Natural killer cell (primary cell): ENCODE measurements at regions of chr3 and their contacts with region 1.

Region 1: GRCh38 chr3:9396700-9397521 is 504 bp upstream of the SETD5 start:
- DNase-seq: peak; percentile 99 to 100
- ATAC-seq: peak; percentile 66 to 86 (median 72)
- H3K4me3 ChIP-seq: peak overlapping the region; percentile 74
- H3K4me3 Mint-ChIP-seq: peak overlapping the region; percentile 97
- H3K27ac ChIP-seq: peak overlapping the region; percentile 96
- H3K27ac Mint-ChIP-seq: peak overlapping the region; percentile 99
- H3K4me1 ChIP-seq: peaks cover 25% of the 10 kb centered on the region
- H3K4me1 Mint-ChIP-seq: peaks cover 64 to 73% of the 10 kb centered on the region in 2 donors
- H3K27me3 ChIP-seq: no peaks in the 10 kb centered on the region
- H3K27me3 Mint-ChIP-seq: no peaks in the 10 kb centered on the region
- CTCF ChIP-seq: no peak

Region 2: DNA sequence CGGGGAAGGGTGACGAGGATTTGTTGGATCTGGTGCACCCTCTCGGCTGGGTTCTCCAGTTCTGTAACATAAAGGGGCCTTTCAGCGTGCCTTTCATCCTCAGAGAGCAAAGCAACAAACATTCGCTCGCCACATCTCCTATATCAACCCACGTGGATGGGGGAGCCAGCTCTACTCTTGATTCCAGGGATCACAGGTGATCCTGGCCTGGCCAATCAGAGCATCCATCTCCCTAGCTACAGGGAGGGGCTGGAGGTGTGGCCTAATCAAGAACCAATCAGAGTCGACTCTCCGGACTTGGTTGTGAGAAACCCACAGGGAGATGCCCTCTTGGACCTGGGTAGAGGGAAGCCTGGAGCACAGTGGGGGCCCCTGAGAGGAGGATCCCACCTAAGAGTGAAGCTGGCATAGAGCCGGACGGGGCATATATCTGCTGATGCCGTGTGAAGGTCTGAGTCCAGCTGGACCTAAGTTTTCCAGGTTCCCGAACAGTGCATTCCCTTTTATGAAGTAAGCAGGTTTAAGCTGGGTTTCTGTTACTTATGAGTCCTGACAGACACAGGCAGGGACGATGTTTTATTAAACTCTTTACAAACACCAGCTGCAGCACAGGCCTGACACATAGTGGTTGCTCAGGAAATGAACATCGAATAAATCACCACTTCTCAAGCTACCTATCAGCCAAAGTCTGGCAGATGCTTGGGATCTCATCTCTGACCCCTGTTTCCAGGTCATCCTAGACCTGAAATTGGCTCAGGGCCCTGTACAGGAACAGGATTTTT is 382.9 kb before region 1 on chr3:
- intact Hi-C with region 1: no loop called
- DNase-seq: no peak
- ATAC-seq: no peak
- H3K4me3 ChIP-seq: no peak overlapping the region
- H3K4me3 Mint-ChIP-seq: no peak overlapping the region
- H3K27ac ChIP-seq: no peak overlapping the region
- H3K27ac Mint-ChIP-seq: no peak overlapping the region
- H3K4me1 ChIP-seq: no peaks in the 10 kb centered on the region
- H3K4me1 Mint-ChIP-seq: no peaks in the 10 kb centered on the region
- H3K27me3 ChIP-seq: no peaks in the 10 kb centered on the region
- H3K27me3 Mint-ChIP-seq: peaks cover 3 to 6% of the 10 kb centered on the region in 2 donors
- CTCF ChIP-seq: no peak

Region 3: DNA sequence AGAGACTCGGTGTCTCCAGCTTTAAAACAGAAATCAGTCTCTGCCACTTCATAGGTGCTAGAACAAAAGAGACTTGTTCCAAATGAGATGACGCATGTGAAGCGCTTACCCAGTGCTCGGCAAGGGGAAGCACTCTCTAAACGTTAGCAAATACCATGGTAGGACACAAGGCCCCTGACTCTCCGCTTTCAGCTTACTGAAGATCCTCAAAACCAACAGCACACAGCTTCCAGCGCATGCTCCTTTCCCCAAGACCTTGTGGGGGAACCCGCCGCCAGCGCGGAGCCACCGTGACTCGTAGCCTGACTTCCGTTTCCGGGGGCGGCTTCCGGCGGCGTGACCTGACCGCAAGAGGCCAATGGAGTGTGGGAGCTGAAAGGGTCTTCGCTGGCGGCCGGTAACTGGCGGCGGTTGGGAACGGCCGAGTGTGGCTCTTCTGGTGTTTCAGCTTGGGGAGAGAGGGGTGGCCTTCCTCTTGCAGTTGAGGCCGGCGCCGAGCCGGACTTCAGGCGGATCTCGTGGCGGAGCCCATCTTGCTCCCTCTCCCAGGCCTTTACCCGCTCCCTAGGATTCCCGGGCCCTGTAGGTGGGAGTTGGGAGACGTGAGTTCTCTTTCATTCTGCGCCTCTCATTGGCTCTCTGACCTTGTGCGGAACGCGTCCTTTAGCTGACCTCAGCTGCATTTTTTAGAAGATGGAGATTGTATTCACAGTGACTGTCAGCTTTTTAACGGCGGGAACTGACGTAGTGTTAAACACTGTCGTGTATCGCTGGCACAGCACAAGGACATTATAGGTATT is 34.0 kb before region 1 on chr3 and contains the start of gene THUMPD3:
- intact Hi-C with region 1: loop called (anchors 1 kb)
- DNase-seq: peak; percentile 89 to 94
- ATAC-seq: peak; percentile 92 to 96 (median 96)
- H3K4me3 ChIP-seq: peak within 1 kb of the TSS; percentile 77
- H3K4me3 Mint-ChIP-seq: peak within 1 kb of the TSS; percentile 97
- H3K27ac ChIP-seq: peak within 1 kb of the TSS; percentile 92
- H3K27ac Mint-ChIP-seq: peak within 1 kb of the TSS; percentile 98 to 99
- H3K4me1 ChIP-seq: peaks cover 11% of the 10 kb centered on the region
- H3K4me1 Mint-ChIP-seq: peaks cover 9 to 10% of the 10 kb centered on the region in 2 donors
- H3K27me3 ChIP-seq: no peaks in the 10 kb centered on the region
- H3K27me3 Mint-ChIP-seq: peaks cover 0 to 8% of the 10 kb centered on the region in 2 donors
- CTCF ChIP-seq: no peak
- total RNA-seq, gene THUMPD3: 44.0 to 48.8 (median 46.3) TPM

Region 4: GRCh38 chr3:9452417-9452816 is 55.5 kb after region 1 on chr3:
- intact Hi-C with region 1: loop called (anchors 2 kb)
- DNase-seq: peak in 1 of 2 donors; percentile 48
- ATAC-seq: peak in 2 of 3 donors; percentile 50 to 76
- H3K4me3 ChIP-seq: no peak overlapping the region
- H3K4me3 Mint-ChIP-seq: peak overlapping the region; percentile 50
- H3K27ac ChIP-seq: peak overlapping the region; percentile 72
- H3K27ac Mint-ChIP-seq: peak overlapping the region; percentile 93 to 95
- H3K4me1 ChIP-seq: no peaks in the 10 kb centered on the region
- H3K4me1 Mint-ChIP-seq: peaks cover 20 to 22% of the 10 kb centered on the region in 2 donors
- H3K27me3 ChIP-seq: no peaks in the 10 kb centered on the region
- H3K27me3 Mint-ChIP-seq: no peaks in the 10 kb centered on the region
- CTCF ChIP-seq: no peak

Region 5: GRCh38 chr3:9649791-9650521 is 253.0 kb after region 1 on chr3:
- intact Hi-C with region 1: loop called (anchors 1 kb)
- DNase-seq: peak in 1 of 2 donors; percentile 29
- ATAC-seq: peak in 1 of 3 donors; percentile 0
- H3K4me3 ChIP-seq: peak overlapping the region; percentile 85
- H3K4me3 Mint-ChIP-seq: peak overlapping the region; percentile 100
- H3K27ac ChIP-seq: peak overlapping the region; percentile 81
- H3K27ac Mint-ChIP-seq: peak overlapping the region; percentile 90 to 96
- H3K4me1 ChIP-seq: peaks cover 30% of the 10 kb centered on the region
- H3K4me1 Mint-ChIP-seq: peaks cover 26 to 28% of the 10 kb centered on the region in 2 donors
- H3K27me3 ChIP-seq: no peaks in the 10 kb centered on the region
- H3K27me3 Mint-ChIP-seq: no peaks in the 10 kb centered on the region
- CTCF ChIP-seq: no peak

Region 6: GRCh38 chr3:9731206-9732079 is 334.5 kb after region 1 on chr3 and contains the start of gene BRPF1:
- intact Hi-C with region 1: loop called (anchors 5 kb)
- DNase-seq: peak; percentile 93 to 99
- ATAC-seq: peak; percentile 89 to 96 (median 90)
- H3K4me3 ChIP-seq: peak within 1 kb of the TSS; percentile 96
- H3K4me3 Mint-ChIP-seq: peak within 1 kb of the TSS; percentile 98
- H3K27ac ChIP-seq: peak within 1 kb of the TSS; percentile 96
- H3K27ac Mint-ChIP-seq: peak within 1 kb of the TSS; percentile 93 to 94
- H3K4me1 ChIP-seq: peaks cover 40% of the 10 kb centered on the region
- H3K4me1 Mint-ChIP-seq: peaks cover 49 to 65% of the 10 kb centered on the region in 2 donors
- H3K27me3 ChIP-seq: no peaks in the 10 kb centered on the region
- H3K27me3 Mint-ChIP-seq: no peaks in the 10 kb centered on the region
- CTCF ChIP-seq: no peak
- total RNA-seq, gene BRPF1: 45.1 to 72.1 (median 66.5) TPM